ENCODE measurements at regions of chr3 and their contacts with region 1.

Region 1: DNA sequence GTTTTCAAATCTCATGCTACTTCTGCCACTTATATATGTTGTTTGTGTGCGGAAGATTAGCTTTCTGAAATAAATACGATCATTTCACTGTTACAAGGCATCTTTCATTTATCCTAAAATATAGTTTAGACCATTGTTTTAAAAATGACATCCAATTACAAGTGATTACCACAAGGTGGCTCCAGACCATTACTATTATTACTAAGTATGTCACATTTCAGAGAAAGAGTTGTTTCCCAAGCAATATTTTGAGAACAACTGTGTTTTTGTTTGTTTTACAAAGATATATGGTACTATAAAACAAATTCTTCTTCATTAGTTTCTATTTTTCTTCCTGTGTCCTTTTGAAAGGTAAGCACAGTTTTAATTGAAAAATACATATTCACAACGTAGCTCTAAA is 136.0 kb upstream of the RAP2B start:
- DNase-seq: no peak
- H3K4me3 ChIP-seq: no peak overlapping the region
- H3K27ac ChIP-seq: no peak overlapping the region
- H3K4me1 ChIP-seq: no peaks in the 10 kb centered on the region
- H3K27me3 ChIP-seq: no peaks in the 10 kb centered on the region
- CTCF ChIP-seq: peak; percentile 95

Region 2: GRCh38 chr3:153291056-153291685 is 265.1 kb after region 1 on chr3:
- CTCF ChIA-PET with region 1: interaction called, 9 read pairs
- POLR2A ChIA-PET with region 1: no interaction called
- intact Hi-C with region 1: loop called (anchors 5 kb)
- DNase-seq: no peak
- H3K4me3 ChIP-seq: no peak overlapping the region
- H3K27ac ChIP-seq: no peak overlapping the region
- H3K4me1 ChIP-seq: no peaks in the 10 kb centered on the region
- H3K27me3 ChIP-seq: no peaks in the 10 kb centered on the region
- CTCF ChIP-seq: peak; percentile 38; the same call in 1 of the 2 replicates

Region 3: DNA sequence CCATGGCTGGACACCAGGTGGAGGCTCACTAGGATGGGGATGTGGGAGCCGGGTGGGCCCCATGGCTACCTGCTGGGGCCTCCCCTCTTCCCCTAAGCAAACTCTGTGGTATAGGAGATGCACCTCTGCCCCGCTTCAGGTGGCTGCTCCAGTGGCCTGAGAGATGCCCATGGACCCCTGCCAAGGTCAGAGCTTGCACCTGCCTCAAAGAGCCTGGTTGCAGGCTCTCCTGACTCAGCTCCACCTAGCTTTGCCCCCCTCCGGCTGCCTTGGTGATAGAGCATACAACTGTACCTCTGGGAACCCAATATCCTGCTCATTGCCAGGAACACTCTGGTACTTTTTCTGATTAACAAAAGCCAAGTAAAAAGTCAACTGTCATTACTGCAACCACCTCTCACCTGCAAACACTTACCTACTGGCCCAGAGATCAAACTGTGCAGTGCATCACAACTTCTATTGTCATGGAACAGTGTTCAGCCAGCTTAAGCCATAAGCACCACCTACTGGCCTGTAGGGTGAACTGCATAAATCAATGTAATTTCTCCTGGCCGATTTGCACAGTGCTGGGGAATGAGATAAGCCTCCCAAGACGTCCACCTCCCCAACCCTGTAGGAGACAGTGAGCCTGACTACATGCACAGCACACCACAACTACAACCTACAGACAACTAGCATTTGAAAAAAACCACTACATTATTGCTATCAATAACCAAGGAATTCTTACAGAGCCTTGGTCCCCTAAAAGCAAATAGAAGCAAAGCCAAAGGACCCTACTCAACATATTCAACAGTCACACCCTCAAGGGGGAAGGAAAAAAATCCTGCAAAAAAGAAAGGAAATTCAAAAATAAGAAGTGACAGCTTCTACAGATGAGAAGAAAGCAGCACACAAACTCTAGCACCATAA is 742.8 kb after region 1 on chr3:
- CTCF ChIA-PET with region 1: no interaction called
- POLR2A ChIA-PET with region 1: no interaction called
- intact Hi-C with region 1: loop called (anchors 1 kb)
- DNase-seq: peak; percentile 38 to 50
- H3K4me3 ChIP-seq: no peak overlapping the region
- H3K27ac ChIP-seq: no peak overlapping the region
- H3K4me1 ChIP-seq: 0 out of 2 replicates have a peak, but pooled peaks cover 9% of the 10 kb centered on the region
- H3K27me3 ChIP-seq: no peaks in the 10 kb centered on the region
- CTCF ChIP-seq: peak; percentile 93

Region 4: GRCh38 chr3:153970741-153971347 is 944.8 kb after region 1 on chr3:
- CTCF ChIA-PET with region 1: no interaction called
- POLR2A ChIA-PET with region 1: no interaction called
- intact Hi-C with region 1: loop called (anchors 5 kb)
- DNase-seq: no peak
- H3K4me3 ChIP-seq: no peak overlapping the region
- H3K27ac ChIP-seq: no peak overlapping the region
- H3K4me1 ChIP-seq: no peaks in the 10 kb centered on the region
- H3K27me3 ChIP-seq: no peaks in the 10 kb centered on the region
- CTCF ChIP-seq: peak; percentile 69

Region 5: DNA sequence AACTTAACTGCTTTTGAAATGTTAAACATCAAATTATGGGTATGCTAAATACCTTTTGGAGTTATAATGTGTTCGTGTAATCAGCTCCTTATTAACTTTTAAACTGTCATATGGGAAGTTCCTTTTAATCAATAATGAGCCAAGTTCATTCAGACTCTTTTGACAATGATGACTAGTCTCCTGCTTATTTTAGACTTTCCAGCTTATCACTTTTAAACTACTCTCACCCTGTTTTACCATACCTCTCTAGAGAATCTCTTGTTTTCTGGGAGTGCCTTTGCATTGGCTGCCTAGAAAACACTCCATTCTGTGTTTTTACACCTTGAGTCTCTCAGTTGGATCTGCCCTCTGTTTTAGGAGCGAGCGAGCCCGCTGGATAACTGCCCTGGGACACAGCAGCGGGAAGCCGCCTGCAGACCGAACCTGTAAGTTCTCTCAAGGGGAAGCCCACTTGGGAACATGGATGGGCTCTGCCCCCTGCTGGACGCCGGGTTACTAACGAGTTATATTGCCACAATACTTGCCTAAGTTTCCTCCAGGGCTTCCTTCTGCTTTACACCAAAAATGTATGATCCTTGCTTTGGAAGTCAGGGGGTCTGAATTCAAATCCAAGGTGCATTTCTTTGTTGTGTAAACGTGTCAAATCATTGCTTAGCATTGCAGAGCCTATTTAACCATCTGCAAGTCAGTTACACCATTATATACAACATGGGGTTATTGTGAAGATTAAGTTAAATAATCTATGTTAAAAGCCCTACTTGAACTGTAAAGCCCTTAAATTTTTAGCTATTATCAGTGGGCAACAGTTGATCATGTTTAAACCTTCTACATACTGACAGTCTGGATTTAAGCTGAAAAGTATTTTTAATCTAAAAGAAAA is 1227.0 kb after region 1 on chr3:
- CTCF ChIA-PET with region 1: no interaction called
- POLR2A ChIA-PET with region 1: no interaction called
- intact Hi-C with region 1: loop called (anchors 1 kb)
- DNase-seq: peak; percentile 60 to 85
- H3K4me3 ChIP-seq: no peak overlapping the region
- H3K27ac ChIP-seq: no peak overlapping the region
- H3K4me1 ChIP-seq: no peaks in the 10 kb centered on the region
- H3K27me3 ChIP-seq: no peaks in the 10 kb centered on the region
- CTCF ChIP-seq: peak; percentile 95

Measured in PC-9 (cell line).